PC-9 (cell line): ENCODE measurements at regions of chr1 and their contacts with region 1.

Region 1: DNA sequence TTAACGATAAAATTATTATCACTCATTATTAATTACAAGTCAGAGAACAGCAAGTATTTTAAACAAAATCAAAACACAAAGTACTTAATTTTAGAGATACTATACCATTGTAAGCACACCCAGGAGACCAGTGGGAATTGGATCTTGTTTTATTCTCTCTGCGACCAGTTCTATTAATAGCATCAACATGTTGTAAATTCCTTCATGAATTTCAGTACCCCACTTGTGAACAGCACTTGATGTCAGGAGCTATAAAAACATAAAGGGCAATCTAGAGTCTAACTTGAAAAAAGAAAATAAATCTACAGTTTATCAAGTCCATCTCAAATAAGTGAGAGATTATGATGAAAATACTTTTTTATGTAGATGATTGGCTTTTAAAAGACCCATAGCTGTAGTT is 42.9 kb downstream of the USP24 start:
- DNase-seq: no peak
- H3K4me3 ChIP-seq: no peak overlapping the region
- H3K27ac ChIP-seq: no peak overlapping the region
- H3K4me1 ChIP-seq: no peaks in the 10 kb centered on the region
- H3K27me3 ChIP-seq: no peaks in the 10 kb centered on the region
- CTCF ChIP-seq: no peak

Region 2: GRCh38 chr1:55185832-55186231 is 13.6 kb after region 1 on chr1:
- CTCF ChIA-PET with region 1: no interaction called
- POLR2A ChIA-PET with region 1: no interaction called
- intact Hi-C with region 1: no loop called
- DNase-seq: no peak
- H3K4me3 ChIP-seq: no peak overlapping the region
- H3K27ac ChIP-seq: no peak overlapping the region
- H3K4me1 ChIP-seq: no peaks in the 10 kb centered on the region
- H3K27me3 ChIP-seq: no peaks in the 10 kb centered on the region
- CTCF ChIP-seq: no peak

Region 3: GRCh38 chr1:55235722-55236121 is 63.5 kb after region 1 on chr1:
- CTCF ChIA-PET with region 1: no interaction called
- POLR2A ChIA-PET with region 1: no interaction called
- intact Hi-C with region 1: no loop called
- DNase-seq: peak in 1 of 2 experiments; percentile 82
- H3K4me3 ChIP-seq: peak overlapping the region; percentile 3; the same call in 1 of the 2 replicates
- H3K27ac ChIP-seq: peak overlapping the region; percentile 10; the same call in 1 of the 2 replicates
- H3K4me1 ChIP-seq: peaks cover 20% of the 10 kb centered on the region
- H3K27me3 ChIP-seq: no peaks in the 10 kb centered on the region
- CTCF ChIP-seq: no peak

Region 4: DNA sequence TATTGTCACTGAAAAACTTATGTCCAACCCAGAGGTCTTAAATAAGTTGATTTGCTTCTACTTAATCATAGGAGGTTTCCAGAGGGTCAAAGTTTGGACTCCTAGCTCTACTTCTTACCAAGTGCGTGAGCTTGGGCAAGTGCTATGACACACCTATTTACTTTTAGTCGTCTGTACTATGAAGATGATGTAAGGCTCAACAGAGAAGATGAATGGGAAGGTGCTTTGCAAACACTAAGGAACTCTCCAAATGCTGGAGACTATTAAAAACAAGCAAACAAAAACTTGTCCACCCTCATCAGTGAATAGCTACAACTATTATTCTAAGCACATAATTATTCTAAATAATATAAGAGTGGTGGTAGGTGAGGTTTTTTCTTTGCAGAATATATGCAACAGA is 275.2 kb after region 1 on chr1:
- CTCF ChIA-PET with region 1: no interaction called
- POLR2A ChIA-PET with region 1: interaction called, 10 read pairs
- intact Hi-C with region 1: no loop called
- DNase-seq: peak in 1 of 2 experiments; percentile 83
- H3K4me3 ChIP-seq: no peak overlapping the region
- H3K27ac ChIP-seq: no peak overlapping the region
- H3K4me1 ChIP-seq: peaks cover 17% of the 10 kb centered on the region
- H3K27me3 ChIP-seq: no peaks in the 10 kb centered on the region
- CTCF ChIP-seq: no peak